ENCODE measurements at regions of chr9 and their contacts with region 1.

Region 1: GRCh38 chr9:16726718-16727451 is 143.6 kb downstream of the BNC2 start:
- DNase-seq: peak; percentile 88
- ATAC-seq: peak; percentile 89

Region 2: GRCh38 chr9:16266648-16267276 is 460.1 kb before region 1 on chr9:
- intact Hi-C with region 1: no loop called
- DNase-seq: no peak
- ATAC-seq: no peak

Region 3: GRCh38 chr9:16869882-16870595 is 143.2 kb after region 1 on chr9:
- intact Hi-C with region 1: loop called (anchors 5 kb)
- DNase-seq: no peak
- ATAC-seq: peak; percentile 17